Astrocyte of the cerebellum (primary cell): ENCODE measurements at regions of chr1 and their contacts with region 1.

Region 1: DNA sequence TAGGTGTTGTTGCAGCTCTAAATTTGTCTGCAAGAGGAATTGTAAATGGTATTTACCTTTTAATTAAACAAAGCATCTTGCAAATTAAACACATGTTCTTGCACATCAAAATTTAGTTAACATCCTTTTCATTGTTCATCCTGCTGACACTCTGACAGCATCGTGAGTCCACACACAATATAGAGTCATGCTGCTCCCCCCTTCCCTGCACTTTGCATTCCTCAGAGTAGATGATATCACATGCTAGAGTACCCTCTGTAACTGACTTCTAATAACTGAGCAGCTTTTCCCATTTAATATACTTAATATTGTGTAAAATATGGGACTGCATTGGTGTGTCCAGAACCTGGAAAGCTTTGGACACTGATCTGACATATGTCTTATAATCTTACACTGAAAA is 138.8 kb upstream of the DPYD start:
- DNase-seq: no peak
- H3K4me3 ChIP-seq: no peak overlapping the region
- CTCF ChIP-seq: no peak

Region 2: GRCh38 chr1:98119796-98120195 is 60.2 kb after region 1 on chr1:
- in situ Hi-C with region 1: loop called (anchors 5 kb)
- DNase-seq: no peak
- H3K4me3 ChIP-seq: no peak overlapping the region
- CTCF ChIP-seq: no peak

Region 3: DNA sequence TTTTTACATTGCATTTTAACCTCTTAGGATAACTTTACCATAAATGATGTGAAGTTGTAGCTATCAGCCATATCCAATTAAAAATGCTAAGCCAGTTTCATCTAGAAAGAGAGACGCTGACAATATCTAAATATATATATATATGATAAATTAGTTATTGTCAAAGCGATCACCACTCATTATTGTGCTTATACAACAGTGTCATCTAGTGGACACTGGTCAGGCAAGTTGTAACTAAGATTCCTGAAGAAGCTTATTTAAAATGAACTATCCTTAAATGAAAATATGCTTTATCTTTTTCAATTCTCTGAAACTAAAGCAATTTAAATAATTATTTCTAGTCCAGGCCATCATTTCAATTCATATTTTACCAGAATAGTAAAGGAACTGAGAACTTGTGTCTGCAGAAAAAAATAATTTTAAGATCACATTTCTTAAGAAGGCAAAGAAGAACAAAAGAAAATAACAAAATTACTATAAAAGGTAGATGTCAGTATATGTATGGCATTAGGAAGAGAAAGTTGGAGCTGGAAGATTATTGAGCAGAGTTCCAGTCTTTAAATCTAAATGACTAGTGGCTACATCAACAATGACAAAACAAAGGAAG is 408.6 kb after region 1 on chr1:
- in situ Hi-C with region 1: loop called (anchors 5 kb)
- DNase-seq: peak; percentile 64
- H3K4me3 ChIP-seq: no peak overlapping the region
- CTCF ChIP-seq: peak; percentile 70